Posterior vena cava (tissue), 2 donors: ENCODE measurements at regions of chr18 and their contacts with region 1.

Region 1: GRCh38 chr18:76678248-76678647 is 144.1 kb upstream of the ZNF236 start:
- DNase-seq: no peak

Region 2: GRCh38 chr18:76442413-76443171 is 235.7 kb before region 1 on chr18:
- intact Hi-C with region 1: loop called in 1 of 2 experiments (anchors 1 kb)
- DNase-seq: peak; percentile 75

Region 3: GRCh38 chr18:76492669-76493212 is 185.5 kb before region 1 on chr18:
- intact Hi-C with region 1: no loop called
- DNase-seq: peak; percentile 100

Region 4: GRCh38 chr18:76721207-76721996 is 43.2 kb after region 1 on chr18:
- intact Hi-C with region 1: no loop called
- DNase-seq: no peak

Region 5: DNA sequence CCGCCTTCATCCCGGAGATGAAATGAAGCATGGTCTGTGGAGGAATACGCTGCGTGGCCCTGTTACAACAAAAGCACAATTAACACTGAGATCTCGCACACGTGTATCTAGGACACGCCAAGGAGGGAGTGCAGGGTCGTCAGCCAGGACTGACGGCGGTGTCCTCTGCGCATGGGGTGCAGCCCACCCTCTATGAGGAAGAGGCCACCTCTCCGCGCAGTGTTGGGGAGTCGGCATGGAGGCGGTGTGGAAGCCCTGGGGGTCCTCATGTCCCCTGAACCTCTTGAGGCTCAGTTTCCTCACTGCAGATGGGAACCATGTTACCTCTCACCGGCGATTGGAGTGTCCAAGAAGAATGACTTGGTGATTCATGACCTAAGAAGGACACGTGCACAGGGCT is 58.1 kb after region 1 on chr18:
- intact Hi-C with region 1: no loop called
- DNase-seq: no peak

Region 6: GRCh38 chr18:76803814-76804213 is 125.6 kb after region 1 on chr18:
- intact Hi-C with region 1: no loop called
- DNase-seq: peak; percentile 50